ENCODE measurements at regions of chr4 and their contacts with region 1.

Region 1: GRCh38 chr4:53908661-53909078 is 155.7 kb downstream of the CHIC2 start:
- DNase-seq: peak in 4 of 5 donors; percentile 6 to 21 (median 14)
- H3K4me3 ChIP-seq: no peak overlapping the region
- H3K4me3 Mint-ChIP-seq: peak overlapping the region in 2 of 8 donors; percentile 13 to 17
- H3K27ac ChIP-seq: no peak overlapping the region
- H3K27ac Mint-ChIP-seq: no peak overlapping the region
- H3K4me1 ChIP-seq: peaks cover 3% of the 10 kb centered on the region
- H3K4me1 Mint-ChIP-seq: peaks cover 0 to 9% (median 7%) of the 10 kb centered on the region in 4 donors
- H3K27me3 ChIP-seq: peaks cover 10% of the 10 kb centered on the region
- H3K27me3 Mint-ChIP-seq: peaks cover 20 to 24% of the 10 kb centered on the region in 2 donors

Region 2: DNA sequence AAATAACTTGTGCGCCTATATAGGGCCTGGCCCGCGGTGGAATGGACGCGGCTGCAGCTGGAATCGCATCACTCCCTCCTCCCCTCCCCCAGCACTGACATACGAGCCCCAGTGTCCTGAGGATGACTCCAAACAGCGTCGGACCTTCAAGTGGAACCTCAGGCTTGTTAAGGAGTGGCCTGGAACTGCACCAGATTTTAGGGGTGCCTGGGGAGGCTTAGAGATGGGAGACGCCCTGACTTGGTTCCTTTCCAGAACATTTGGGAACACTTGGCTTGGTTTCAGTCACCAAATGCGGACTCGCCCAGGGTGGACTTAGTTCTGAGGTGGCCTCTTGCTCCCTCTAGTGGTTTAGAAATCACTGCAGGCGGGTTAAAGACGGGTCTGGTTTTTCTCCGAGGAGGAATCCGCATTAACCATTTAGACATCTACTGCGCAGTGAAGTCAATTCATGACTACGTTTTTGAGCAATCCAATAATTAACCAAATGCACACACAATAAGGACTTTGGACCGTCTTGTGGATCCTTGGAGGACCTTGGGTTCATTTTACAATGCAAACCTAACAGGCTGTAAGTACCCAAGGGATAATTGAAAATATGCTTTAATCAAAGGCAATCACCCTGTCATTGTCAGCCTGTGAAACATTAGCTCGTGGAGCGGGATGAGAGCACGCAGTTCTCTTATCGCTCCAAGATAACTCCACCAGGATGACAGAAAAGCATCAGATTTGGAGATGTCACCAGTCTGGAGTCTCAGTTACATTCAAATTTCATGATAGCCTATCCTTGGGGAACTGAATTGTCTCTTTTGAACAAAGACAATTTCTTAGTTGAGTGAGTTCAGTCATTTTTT is 309.2 kb after region 1 on chr4:
- CTCF ChIA-PET with region 1: interaction called, 37 read pairs
- POLR2A ChIA-PET with region 1: no interaction called
- intact Hi-C with region 1: no loop called
- DNase-seq: peak in 4 of 5 donors; percentile 53 to 59 (median 54)
- H3K4me3 ChIP-seq: no peak overlapping the region
- H3K4me3 Mint-ChIP-seq: peak overlapping the region in 3 of 8 donors; percentile 39 to 61 (median 53)
- H3K27ac ChIP-seq: no peak overlapping the region
- H3K27ac Mint-ChIP-seq: no peak overlapping the region
- H3K4me1 ChIP-seq: no peaks in the 10 kb centered on the region
- H3K4me1 Mint-ChIP-seq: peaks cover 4 to 7% (median 5%) of the 10 kb centered on the region in 4 donors
- H3K27me3 ChIP-seq: peaks cover 4% of the 10 kb centered on the region
- H3K27me3 Mint-ChIP-seq: peaks cover 22 to 27% of the 10 kb centered on the region in 2 donors

Region 3: DNA sequence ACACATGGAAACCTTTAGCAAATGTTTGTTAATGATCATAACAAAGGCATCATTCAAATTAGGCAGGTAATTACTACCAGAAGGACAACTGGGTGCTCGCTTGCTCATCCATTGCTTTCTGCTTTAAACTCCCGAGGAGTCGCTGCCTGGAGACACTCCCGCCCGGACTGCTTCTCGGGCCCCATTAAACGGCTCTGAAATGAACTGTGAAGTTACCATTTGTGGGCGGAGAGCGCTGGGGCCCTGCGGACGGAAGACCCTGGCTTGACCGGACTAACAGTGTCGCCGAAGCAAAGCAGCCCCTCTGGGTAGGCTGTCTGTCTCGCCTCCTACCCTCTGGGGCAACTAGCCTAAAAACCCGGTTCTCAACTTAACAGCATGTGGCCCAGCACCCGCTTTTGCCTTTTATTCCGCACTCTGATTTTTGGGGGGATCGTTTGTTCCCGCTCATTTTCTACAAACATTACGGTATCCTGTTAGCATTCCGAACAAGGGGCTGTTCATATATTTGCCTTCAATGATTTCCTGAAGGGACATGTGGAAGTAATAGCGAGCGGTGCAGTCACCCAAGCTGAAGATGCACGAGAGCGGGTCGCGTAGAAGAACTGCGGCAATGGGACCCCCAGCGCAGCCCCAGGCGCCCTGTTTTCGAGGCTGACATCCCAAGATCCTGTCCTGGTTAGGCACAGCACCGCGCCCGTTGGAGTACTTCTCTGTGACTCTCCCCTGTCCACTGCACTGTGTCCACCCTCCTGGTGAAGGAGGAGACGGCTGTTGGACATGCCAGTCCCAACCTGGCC is 318.8 kb after region 1 on chr4:
- CTCF ChIA-PET with region 1: interaction called, 64 read pairs
- POLR2A ChIA-PET with region 1: no interaction called
- intact Hi-C with region 1: loop called (anchors 2 kb)
- DNase-seq: no peak
- H3K4me3 ChIP-seq: peak overlapping the region in 1 of 2 donors; percentile 3
- H3K4me3 Mint-ChIP-seq: peak overlapping the region; percentile 56 to 90 (median 80)
- H3K27ac ChIP-seq: no peak overlapping the region
- H3K27ac Mint-ChIP-seq: peak overlapping the region in 1 of 7 donors; percentile 70
- H3K4me1 ChIP-seq: peaks cover 36% of the 10 kb centered on the region
- H3K4me1 Mint-ChIP-seq: peaks cover 13 to 57% (median 44%) of the 10 kb centered on the region in 4 donors
- H3K27me3 ChIP-seq: peaks cover 46% of the 10 kb centered on the region
- H3K27me3 Mint-ChIP-seq: peaks cover 67 to 71% of the 10 kb centered on the region in 2 donors

Measured in CD4-positive, alpha-beta memory T cell (primary cell).